ENCODE measurements at regions of chr11 and their contacts with region 1.

Region 1: GRCh38 chr11:35617687-35618496 is at the start of gene FJX1:
- DNase-seq: peak in 1 of 2 donors; percentile 77
- H3K4me3 ChIP-seq: peak within 1 kb of the TSS; percentile 68 to 74
- H3K27ac ChIP-seq: peak within 1 kb of the TSS; percentile 54 to 68
- H3K4me1 ChIP-seq: peaks cover 3 to 16% of the 10 kb centered on the region in 2 donors
- H3K27me3 ChIP-seq: peaks cover 7% of the 10 kb centered on the region
- CTCF ChIP-seq: no peak
- total RNA-seq, gene FJX1: 16.4 TPM

Region 2: DNA sequence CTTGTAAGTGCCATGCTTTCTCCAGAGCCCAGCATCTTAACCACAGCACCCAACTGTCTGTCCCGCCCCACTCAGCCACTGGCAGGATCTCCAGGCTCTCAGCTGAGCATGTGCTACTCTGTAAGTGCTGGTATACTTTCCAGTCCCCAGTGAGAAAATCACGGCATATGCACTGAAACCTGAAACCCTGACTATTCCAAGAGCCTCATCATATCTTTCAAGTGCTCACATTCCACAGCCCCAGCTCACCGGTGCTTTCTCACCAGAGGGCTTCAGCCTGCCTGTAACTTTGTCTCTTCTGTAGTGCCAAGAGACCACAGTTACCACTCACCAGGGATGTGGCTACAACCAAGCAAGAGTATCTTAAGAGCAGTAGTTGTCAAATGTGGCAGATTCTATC is 68.1 kb before region 1 on chr11:
- intact Hi-C with region 1: no loop called
- DNase-seq: no peak
- H3K4me3 ChIP-seq: no peak overlapping the region
- H3K27ac ChIP-seq: no peak overlapping the region
- H3K4me1 ChIP-seq: no peaks in the 10 kb centered on the region
- H3K27me3 ChIP-seq: no peaks in the 10 kb centered on the region
- CTCF ChIP-seq: no peak

Region 3: GRCh38 chr11:35822815-35823495 is 205.1 kb after region 1 on chr11:
- intact Hi-C with region 1: loop called (anchors 5 kb)
- DNase-seq: no peak
- H3K4me3 ChIP-seq: no peak overlapping the region
- H3K27ac ChIP-seq: no peak overlapping the region
- H3K4me1 ChIP-seq: no peaks in the 10 kb centered on the region
- H3K27me3 ChIP-seq: no peaks in the 10 kb centered on the region
- CTCF ChIP-seq: no peak

Region 4: DNA sequence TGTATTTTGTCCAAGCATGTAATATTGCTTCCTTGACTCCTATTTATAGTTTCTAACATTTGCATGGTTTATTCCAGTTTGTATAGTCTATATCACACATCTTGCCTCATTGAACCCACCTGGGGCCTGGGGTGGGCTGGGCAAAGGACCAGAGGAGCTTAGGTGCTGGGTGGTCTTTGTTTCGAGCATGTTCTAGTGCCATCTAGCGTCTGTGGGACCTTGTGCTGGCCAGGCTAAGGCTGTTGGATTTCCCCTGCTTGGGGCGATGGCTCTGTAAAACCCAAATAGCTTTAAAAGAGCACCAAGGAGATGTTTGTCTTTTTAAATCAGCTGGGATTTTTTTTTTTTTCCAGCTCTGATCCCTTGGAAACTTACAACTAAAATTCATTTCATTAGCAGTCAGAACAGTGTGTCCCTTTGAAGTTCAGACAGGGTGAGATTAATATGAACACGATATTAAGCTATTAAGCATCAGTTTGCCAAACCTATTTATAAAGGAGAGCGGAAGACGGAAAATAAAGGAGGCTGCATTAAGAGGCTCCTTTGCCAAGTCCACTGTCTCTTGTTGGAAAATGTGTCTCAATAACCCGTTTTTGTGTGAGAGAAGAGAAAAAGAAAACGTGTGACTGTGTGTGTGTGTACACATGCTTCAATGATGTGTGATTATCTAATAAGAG is 514.0 kb after region 1 on chr11:
- intact Hi-C with region 1: loop called (anchors 2 kb)
- DNase-seq: peak in 1 of 2 donors; percentile 65
- H3K4me3 ChIP-seq: no peak overlapping the region
- H3K27ac ChIP-seq: no peak overlapping the region
- H3K4me1 ChIP-seq: no peaks in the 10 kb centered on the region
- H3K27me3 ChIP-seq: no peaks in the 10 kb centered on the region
- CTCF ChIP-seq: peak in 2 of 3 experiments; percentile 56 to 75

Region 5: GRCh38 chr11:36289226-36289852 is 671.4 kb after region 1 on chr11 and contains the start of gene COMMD9:
- intact Hi-C with region 1: loop called (anchors 5 kb)
- DNase-seq: peak; percentile 86 to 97
- H3K4me3 ChIP-seq: peak within 1 kb of the TSS; percentile 51 to 69
- H3K27ac ChIP-seq: no peak within 1 kb of the TSS
- H3K4me1 ChIP-seq: peaks cover 5 to 8% of the 10 kb centered on the region in 2 donors
- H3K27me3 ChIP-seq: no peaks in the 10 kb centered on the region
- CTCF ChIP-seq: no peak
- total RNA-seq, gene COMMD9: 69.2 TPM